HepG2 (cell line): ENCODE measurements at regions of chr5 and their contacts with region 1.

Region 1: GRCh38 chr5:42767491-42768105 is 11.0 kb downstream of the CCDC152 start:
- DNase-seq: peak; percentile 19
- ATAC-seq: peak; percentile 57
- H3K4me3 ChIP-seq: no peak overlapping the region
- H3K27ac ChIP-seq: no peak overlapping the region
- H3K4me1 ChIP-seq: peaks cover 8% of the 10 kb centered on the region
- H3K27me3 ChIP-seq: 0 out of 5 replicates have a peak, but pooled peaks cover 0 to 9% of the 10 kb centered on the region in 2 experiments
- CTCF ChIP-seq: peak; percentile 64
- EP300 ChIP-seq: no peak
- POLR2A ChIP-seq: no peak
- RAD21 ChIP-seq: peak; percentile 29; the same call in 1 of the 2 replicates

Region 2: GRCh38 chr5:42005561-42006153 is 761.9 kb before region 1 on chr5:
- CTCF ChIA-PET with region 1: interaction called, 7 read pairs
- POLR2A ChIA-PET with region 1: no interaction called
- in situ Hi-C with region 1: no loop called
- intact Hi-C with region 1: loop called (anchors 2 kb)
- DNase-seq: peak; percentile 6
- ATAC-seq: peak; percentile 57
- H3K4me3 ChIP-seq: no peak overlapping the region
- H3K27ac ChIP-seq: no peak overlapping the region
- H3K4me1 ChIP-seq: no peaks in the 10 kb centered on the region
- H3K27me3 ChIP-seq: no peaks in the 10 kb centered on the region
- CTCF ChIP-seq: peak; percentile 52
- EP300 ChIP-seq: no peak
- POLR2A ChIP-seq: no peak
- RAD21 ChIP-seq: no peak

Region 3: DNA sequence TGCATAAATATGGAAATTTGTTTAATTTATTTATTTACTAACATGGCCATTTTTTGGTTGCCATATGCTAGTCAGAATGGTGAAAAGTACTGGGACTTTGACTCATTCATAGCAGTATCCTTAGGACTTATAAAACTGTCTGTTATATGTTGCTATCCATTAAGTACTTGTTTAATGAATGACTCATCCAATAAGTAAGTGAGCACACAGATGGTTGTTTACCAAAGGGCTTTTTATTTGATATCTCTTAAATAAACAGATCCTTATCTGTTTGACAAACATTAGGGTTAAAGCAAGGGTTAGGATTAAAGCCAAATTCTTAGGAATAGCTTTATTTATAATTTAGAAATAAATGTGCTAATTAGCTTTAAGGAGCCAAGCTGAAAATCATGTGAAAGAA is 659.1 kb before region 1 on chr5:
- CTCF ChIA-PET with region 1: no interaction called
- POLR2A ChIA-PET with region 1: no interaction called
- in situ Hi-C with region 1: no loop called
- intact Hi-C with region 1: loop called (anchors 5 kb)
- DNase-seq: peak; percentile 78
- ATAC-seq: peak; percentile 84
- H3K4me3 ChIP-seq: no peak overlapping the region
- H3K27ac ChIP-seq: no peak overlapping the region
- H3K4me1 ChIP-seq: no peaks in the 10 kb centered on the region
- H3K27me3 ChIP-seq: peaks cover 0 to 14% of the 10 kb centered on the region in 2 experiments; a peak in 3 of 5 replicates
- CTCF ChIP-seq: no peak
- EP300 ChIP-seq: peak in 1 of 2 experiments; percentile 70; a peak in 2 of 4 replicates
- POLR2A ChIP-seq: no peak
- RAD21 ChIP-seq: no peak

Region 4: DNA sequence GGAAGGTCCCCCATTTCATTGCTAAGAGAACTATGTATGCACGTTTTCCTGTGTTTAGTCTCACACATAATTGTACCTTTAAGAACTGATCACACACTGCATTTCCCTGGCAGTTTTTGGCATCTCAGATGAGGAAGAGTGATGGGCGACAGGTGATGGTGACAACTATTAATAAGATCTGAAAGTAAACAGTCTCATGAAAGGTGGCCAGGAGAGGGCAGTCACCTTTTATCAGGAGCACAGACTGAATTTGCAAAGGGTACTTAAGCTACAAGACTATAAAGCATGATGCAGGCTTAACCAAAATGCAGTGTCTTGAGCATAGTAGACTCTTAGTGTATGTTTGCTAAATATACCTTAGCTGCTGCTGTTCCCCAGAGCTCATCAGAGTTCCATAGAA is 252.8 kb before region 1 on chr5:
- CTCF ChIA-PET with region 1: no interaction called
- POLR2A ChIA-PET with region 1: no interaction called
- in situ Hi-C with region 1: no loop called
- intact Hi-C with region 1: loop called (anchors 10 kb)
- DNase-seq: peak; percentile 3
- ATAC-seq: peak; percentile 58
- H3K4me3 ChIP-seq: no peak overlapping the region
- H3K27ac ChIP-seq: no peak overlapping the region
- H3K4me1 ChIP-seq: peaks cover 32% of the 10 kb centered on the region
- H3K27me3 ChIP-seq: no peaks in the 10 kb centered on the region
- CTCF ChIP-seq: peak; percentile 41
- EP300 ChIP-seq: no peak
- POLR2A ChIP-seq: no peak
- RAD21 ChIP-seq: no peak

Region 5: GRCh38 chr5:42756606-42757601 is 10.7 kb before region 1 on chr5 and contains the start of gene CCDC152:
- CTCF ChIA-PET with region 1: no interaction called
- POLR2A ChIA-PET with region 1: no interaction called
- in situ Hi-C with region 1: no loop called
- intact Hi-C with region 1: no loop called
- DNase-seq: no peak
- ATAC-seq: no peak; the same call in 2 of the 3 replicates
- H3K4me3 ChIP-seq: no peak within 1 kb of the TSS
- H3K27ac ChIP-seq: no peak within 1 kb of the TSS
- H3K4me1 ChIP-seq: no peaks in the 10 kb centered on the region
- H3K27me3 ChIP-seq: peaks cover 0 to 4% of the 10 kb centered on the region in 2 experiments; a peak in 1 of 5 replicates
- CTCF ChIP-seq: no peak
- EP300 ChIP-seq: no peak
- POLR2A ChIP-seq: no peak
- RAD21 ChIP-seq: no peak
- total RNA-seq, gene CCDC152: 0.15 and 0.20 TPM in 2 replicates